SK-N-SH (cell line): ENCODE measurements at regions of chr17 and their contacts with region 1.

Region 1: DNA sequence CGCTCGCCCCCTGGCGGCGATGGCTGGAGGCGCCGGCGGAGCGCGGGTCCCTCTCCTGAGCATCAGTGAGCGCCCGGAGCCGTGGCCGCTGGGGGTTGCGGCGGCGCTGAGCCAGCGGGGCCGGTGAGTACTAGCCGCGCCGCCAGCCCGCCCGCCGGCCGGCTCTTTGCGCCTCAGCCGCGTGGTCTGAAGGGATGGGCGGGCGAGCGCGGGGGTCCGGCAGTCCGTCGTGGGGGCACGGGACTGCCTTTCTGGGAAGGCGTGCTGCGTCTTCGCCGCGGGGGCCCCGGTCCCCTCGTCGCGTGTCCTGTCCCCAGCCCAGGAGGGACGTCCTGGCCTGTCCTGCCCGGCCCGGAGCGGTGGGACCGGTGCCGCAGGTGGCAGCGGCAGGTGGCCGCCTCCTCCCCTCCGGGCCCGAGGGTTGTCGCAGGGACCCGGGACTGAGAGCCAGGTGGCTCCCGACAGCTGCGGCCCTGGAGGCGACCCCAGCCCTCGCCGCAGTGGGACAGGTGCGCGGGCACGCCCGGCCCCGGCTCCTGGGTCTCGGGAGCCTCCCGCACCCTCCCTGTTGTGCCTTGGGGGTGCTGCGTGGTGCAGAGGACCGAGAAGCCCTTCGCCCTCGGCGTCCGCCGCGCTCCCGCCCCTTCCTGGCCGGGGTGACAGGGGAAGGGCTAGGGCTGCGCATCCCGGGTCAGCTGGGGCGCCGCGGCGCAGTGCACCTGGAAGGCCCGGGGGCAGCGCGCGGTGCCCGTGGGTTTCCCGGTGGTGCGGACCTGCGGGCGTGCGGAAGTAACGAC is at the start of gene SPECC1:
- DNase-seq: peak; percentile 94
- H3K4me3 ChIP-seq: peak within 1 kb of the TSS; percentile 66 to 82
- H3K27ac ChIP-seq: peak within 1 kb of the TSS in 1 of 2 experiments; percentile 67; a peak in 1 of 4 replicates
- H3K4me1 ChIP-seq: peaks cover 0 to 4% of the 10 kb centered on the region in 2 experiments; a peak in 2 of 4 replicates
- H3K27me3 ChIP-seq: no peaks in the 10 kb centered on the region; the same call in 1 of the 2 replicates
- CTCF ChIP-seq: peak; percentile 73
- EP300 ChIP-seq: no peak; a peak in 1 of 4 replicates
- RAD21 ChIP-seq: peak; percentile 32; the same call in 1 of the 2 replicates
- polyA plus RNA-seq, gene SPECC1: 8.8 and 11.2 TPM in 2 replicates

Region 2: DNA sequence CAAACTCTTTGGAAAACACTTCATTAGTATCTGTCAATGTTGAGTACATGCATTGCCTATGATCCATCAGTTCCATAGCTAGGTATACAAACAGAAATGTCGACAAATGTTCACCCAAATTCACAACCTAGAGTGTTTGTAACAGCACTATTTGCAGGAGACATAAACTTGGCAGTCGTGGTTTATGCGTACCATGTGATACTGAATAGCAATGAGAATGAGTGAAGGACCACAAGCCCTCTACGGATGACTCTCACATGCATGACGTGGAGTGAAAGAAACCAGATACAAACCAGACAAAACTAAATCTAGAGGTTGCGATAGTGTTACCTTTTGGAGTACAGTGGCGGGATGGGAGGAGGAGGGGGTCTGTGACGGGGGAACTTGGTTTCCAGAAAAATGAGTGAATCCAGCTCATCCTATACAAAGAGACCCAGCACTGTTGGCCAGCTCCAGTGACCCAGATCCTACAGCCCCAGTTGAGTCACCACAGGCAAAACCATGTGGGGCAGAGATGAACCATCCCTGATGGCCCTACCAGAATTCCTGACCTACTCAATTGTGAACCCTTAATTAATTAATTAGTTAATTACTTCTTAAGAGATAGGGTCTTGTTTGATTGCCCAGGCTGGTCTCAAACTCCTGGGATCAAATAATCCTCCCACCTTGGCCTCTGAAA is 125.8 kb before region 1 on chr17:
- CTCF ChIA-PET with region 1: no interaction called
- POLR2A ChIA-PET with region 1: no interaction called
- DNase-seq: no peak
- H3K4me3 ChIP-seq: no peak overlapping the region
- H3K27ac ChIP-seq: no peak overlapping the region
- H3K4me1 ChIP-seq: no peaks in the 10 kb centered on the region
- H3K27me3 ChIP-seq: no peaks in the 10 kb centered on the region
- CTCF ChIP-seq: no peak
- EP300 ChIP-seq: no peak
- RAD21 ChIP-seq: no peak

Region 3: GRCh38 chr17:19992803-19993713 is 16.4 kb before region 1 on chr17:
- CTCF ChIA-PET with region 1: interaction called, 56 read pairs
- POLR2A ChIA-PET with region 1: interaction called, 4 read pairs
- DNase-seq: peak; percentile 80
- H3K4me3 ChIP-seq: peak overlapping the region; percentile 9 to 40; a peak in 1 of 4 replicates
- H3K27ac ChIP-seq: no peak overlapping the region
- H3K4me1 ChIP-seq: no peaks in the 10 kb centered on the region
- H3K27me3 ChIP-seq: no peaks in the 10 kb centered on the region
- CTCF ChIP-seq: peak; percentile 72
- EP300 ChIP-seq: no peak
- RAD21 ChIP-seq: peak; percentile 93

Region 4: DNA sequence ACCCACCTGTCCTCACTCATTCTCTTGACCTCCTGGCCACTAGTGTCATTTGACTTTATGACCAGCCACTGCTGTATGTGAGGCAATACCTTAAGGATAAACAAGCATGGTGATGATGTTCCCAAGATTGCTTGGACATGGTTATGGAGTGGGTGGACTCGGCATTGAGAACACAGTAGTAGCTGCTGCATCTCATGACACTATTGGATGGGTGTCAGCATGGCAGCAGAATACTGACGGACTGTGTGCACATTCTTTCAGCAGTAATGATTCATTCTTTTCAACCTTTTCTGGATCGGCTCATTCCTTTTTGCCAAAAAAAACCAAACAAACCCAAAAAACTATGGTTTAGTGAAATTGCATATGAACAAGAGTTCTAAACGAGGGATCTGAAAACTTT is 13.2 kb after region 1 on chr17:
- CTCF ChIA-PET with region 1: interaction called, 20 read pairs
- POLR2A ChIA-PET with region 1: no interaction called
- DNase-seq: no peak
- H3K4me3 ChIP-seq: no peak overlapping the region
- H3K27ac ChIP-seq: no peak overlapping the region
- H3K4me1 ChIP-seq: no peaks in the 10 kb centered on the region
- H3K27me3 ChIP-seq: no peaks in the 10 kb centered on the region
- CTCF ChIP-seq: no peak
- EP300 ChIP-seq: no peak
- RAD21 ChIP-seq: no peak

Region 5: GRCh38 chr17:20028443-20028842 is 18.9 kb after region 1 on chr17:
- CTCF ChIA-PET with region 1: interaction called, 12 read pairs
- POLR2A ChIA-PET with region 1: no interaction called
- DNase-seq: no peak
- H3K4me3 ChIP-seq: no peak overlapping the region
- H3K27ac ChIP-seq: no peak overlapping the region
- H3K4me1 ChIP-seq: no peaks in the 10 kb centered on the region
- H3K27me3 ChIP-seq: no peaks in the 10 kb centered on the region
- CTCF ChIP-seq: no peak
- EP300 ChIP-seq: no peak
- RAD21 ChIP-seq: no peak

Region 6: GRCh38 chr17:20095336-20096080 is 86.0 kb after region 1 on chr17:
- CTCF ChIA-PET with region 1: interaction called, 24 read pairs
- POLR2A ChIA-PET with region 1: no interaction called
- DNase-seq: peak; percentile 80
- H3K4me3 ChIP-seq: peak overlapping the region; percentile 0 to 27; a peak in 3 of 4 replicates
- H3K27ac ChIP-seq: peak overlapping the region in 1 of 2 experiments; percentile 77; a peak in 2 of 4 replicates
- H3K4me1 ChIP-seq: peaks cover 0 to 14% of the 10 kb centered on the region in 2 experiments; a peak in 1 of 4 replicates
- H3K27me3 ChIP-seq: no peaks in the 10 kb centered on the region
- CTCF ChIP-seq: peak; percentile 49
- EP300 ChIP-seq: no peak
- RAD21 ChIP-seq: peak; percentile 60

Region 7: DNA sequence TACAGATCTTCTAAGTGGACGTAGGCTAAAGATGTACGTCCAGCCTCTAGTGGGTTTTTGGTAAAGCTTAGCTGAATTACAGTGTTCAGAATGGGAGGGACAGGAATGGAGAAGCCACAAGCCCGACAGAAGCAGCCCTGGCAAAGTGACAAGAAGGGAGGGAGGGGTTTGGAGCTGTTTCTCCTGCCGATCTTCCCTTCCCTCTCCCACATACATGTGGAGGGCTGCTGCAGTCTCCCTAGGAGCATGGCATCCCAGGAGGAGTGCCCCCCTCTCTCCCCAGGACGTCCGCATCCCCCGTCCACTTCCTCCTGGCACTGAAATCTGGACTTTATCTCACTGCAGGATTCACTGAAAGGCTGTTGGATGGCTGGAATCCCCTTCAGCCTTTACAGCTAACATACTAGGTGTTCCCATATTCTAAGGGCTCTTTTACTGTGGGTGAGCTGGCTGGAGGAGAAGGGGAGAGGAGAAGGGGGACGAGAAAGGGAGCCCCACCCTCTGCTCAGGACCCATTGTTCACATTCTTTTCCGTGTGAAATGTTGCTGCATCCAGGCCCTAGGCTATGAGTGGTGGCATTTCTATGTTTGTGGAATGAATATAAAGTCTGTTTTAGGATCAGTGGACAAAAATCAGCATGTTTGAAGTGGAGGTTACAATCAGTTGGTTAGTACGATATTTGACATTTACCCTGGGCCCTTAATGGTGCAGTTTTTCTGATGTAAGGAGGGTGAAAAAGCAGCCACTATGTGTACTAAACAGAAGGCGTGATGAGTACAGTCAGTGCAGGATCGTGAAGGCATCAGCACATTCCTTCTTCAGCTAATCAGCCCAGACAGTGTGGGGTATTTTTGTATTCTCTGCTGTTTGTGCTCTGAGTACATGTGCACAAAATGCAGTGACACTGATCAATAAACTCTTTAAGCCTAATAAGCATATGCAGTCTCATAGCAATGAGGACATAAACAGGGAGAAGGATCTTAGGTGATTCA is 94.2 kb after region 1 on chr17:
- CTCF ChIA-PET with region 1: interaction called, 11 read pairs
- POLR2A ChIA-PET with region 1: no interaction called
- DNase-seq: peak; percentile 41
- H3K4me3 ChIP-seq: no peak overlapping the region
- H3K27ac ChIP-seq: no peak overlapping the region
- H3K4me1 ChIP-seq: peaks cover 0 to 6% of the 10 kb centered on the region in 2 experiments; a peak in 1 of 4 replicates
- H3K27me3 ChIP-seq: no peaks in the 10 kb centered on the region
- CTCF ChIP-seq: no peak
- EP300 ChIP-seq: no peak
- RAD21 ChIP-seq: no peak